HepG2 (cell line): ENCODE measurements at regions of chr22 and their contacts with region 1.

Region 1: GRCh38 chr22:23163665-23164064 is 16.6 kb upstream of the BCR start:
- DNase-seq: no peak
- ATAC-seq: peak; percentile 51
- H3K4me3 ChIP-seq: peak overlapping the region in 1 of 3 experiments; percentile 42; a peak in 2 of 6 replicates
- H3K27ac ChIP-seq: peak overlapping the region; percentile 11
- H3K4me1 ChIP-seq: peaks cover 86% of the 10 kb centered on the region
- H3K27me3 ChIP-seq: no peaks in the 10 kb centered on the region
- CTCF ChIP-seq: no peak
- EP300 ChIP-seq: no peak
- POLR2A ChIP-seq: no peak
- RAD21 ChIP-seq: no peak

Region 2: GRCh38 chr22:23565288-23565941 is 401.8 kb after region 1 on chr22:
- CTCF ChIA-PET with region 1: no interaction called
- POLR2A ChIA-PET with region 1: no interaction called
- in situ Hi-C with region 1: loop called (anchors 25 kb)
- intact Hi-C with region 1: no loop called
- DNase-seq: no peak
- ATAC-seq: peak; percentile 48
- H3K4me3 ChIP-seq: peak overlapping the region; percentile 43 to 73 (median 45)
- H3K27ac ChIP-seq: peak overlapping the region; percentile 40
- H3K4me1 ChIP-seq: peaks cover 34% of the 10 kb centered on the region
- H3K27me3 ChIP-seq: no peaks in the 10 kb centered on the region; a peak in 3 of 5 replicates
- CTCF ChIP-seq: peak; percentile 22; the same call in 1 of the 2 replicates
- EP300 ChIP-seq: no peak
- POLR2A ChIP-seq: no peak
- RAD21 ChIP-seq: no peak